Common myeloid progenitor, CD34-positive (primary cell): ENCODE measurements at regions of chr12 and their contacts with region 1.

Region 1: DNA sequence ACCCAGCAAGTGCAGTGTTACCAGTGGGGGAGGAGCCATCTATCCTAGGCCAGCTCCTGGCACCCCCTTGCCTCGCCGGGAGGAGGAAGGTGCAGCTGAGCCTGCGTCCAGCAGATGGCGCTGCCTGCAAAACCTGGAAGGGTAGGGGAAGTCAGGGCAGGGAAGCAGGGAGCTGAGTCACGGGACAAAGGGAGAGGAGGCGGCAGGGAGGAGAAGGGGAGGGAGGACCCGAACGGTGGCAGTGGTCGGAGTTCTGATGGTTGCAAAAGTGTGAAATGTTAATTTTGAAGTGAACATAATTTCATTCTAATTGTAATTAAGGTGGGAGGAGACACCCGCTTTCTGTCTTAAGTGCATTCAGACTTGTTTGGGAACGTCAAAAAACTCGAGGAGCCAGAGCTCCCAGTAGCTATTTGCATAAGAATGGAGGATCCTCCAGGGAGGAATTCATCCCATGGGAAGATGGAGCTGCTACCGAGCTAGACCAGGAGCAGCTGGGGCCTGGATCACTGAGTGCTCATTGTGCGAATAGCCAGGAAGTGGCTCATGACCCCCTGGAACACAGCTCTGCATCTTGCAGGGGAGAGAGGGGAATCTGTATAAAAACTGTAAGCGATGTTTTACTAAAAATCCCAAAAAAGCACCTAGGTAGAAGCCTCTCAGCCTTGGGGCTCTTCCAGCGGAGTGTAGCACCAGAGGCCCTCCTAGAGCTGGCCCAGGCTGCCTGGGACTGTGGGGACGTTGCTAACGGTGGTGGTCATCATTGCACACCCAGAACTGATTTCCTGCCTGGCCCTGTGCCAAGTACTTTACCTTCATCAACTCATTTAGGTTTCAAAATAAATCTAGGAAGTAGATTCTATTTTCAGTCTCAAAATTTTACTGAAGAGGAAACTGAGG is 59.5 kb downstream of the EMP1 start:
- DNase-seq: peak; percentile 92 to 94 (median 92)
- H3K4me3 ChIP-seq: peak overlapping the region in 6 of 7 experiments; percentile 25 to 67 (median 44)
- H3K27ac ChIP-seq: no peak overlapping the region
- H3K4me1 ChIP-seq: peaks cover 0 to 9% (median 6%) of the 10 kb centered on the region in 4 experiments
- H3K27me3 ChIP-seq: peaks cover 0 to 2% (median 0%) of the 10 kb centered on the region in 5 experiments

Region 2: DNA sequence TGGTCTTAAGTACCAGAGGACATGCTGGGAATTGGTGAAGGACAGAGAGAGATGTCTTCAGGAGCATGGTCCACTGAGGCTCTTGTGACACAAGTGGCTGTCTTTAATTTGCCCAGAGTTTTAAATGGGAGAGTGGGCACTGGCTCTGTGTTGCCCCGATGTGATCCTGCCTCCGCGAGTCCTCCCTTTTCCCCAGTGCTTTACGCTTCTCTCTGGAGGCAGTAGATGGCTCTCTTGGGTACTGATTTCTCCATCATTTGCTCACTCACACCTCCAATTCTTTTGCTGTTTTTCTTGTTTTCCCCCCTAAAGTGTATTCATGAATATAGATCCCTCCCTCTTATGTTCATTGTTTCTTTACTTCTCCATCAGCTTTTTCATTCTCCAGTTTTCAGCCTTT is 14.8 kb after region 1 on chr12:
- CTCF ChIA-PET with region 1: interaction called, 10 read pairs
- POLR2A ChIA-PET with region 1: no interaction called
- DNase-seq: no peak
- H3K4me3 ChIP-seq: no peak overlapping the region
- H3K27ac ChIP-seq: no peak overlapping the region
- H3K4me1 ChIP-seq: peaks cover 0 to 7% (median 2%) of the 10 kb centered on the region in 4 experiments
- H3K27me3 ChIP-seq: peaks cover 0 to 11% (median 2%) of the 10 kb centered on the region in 5 experiments

Region 3: DNA sequence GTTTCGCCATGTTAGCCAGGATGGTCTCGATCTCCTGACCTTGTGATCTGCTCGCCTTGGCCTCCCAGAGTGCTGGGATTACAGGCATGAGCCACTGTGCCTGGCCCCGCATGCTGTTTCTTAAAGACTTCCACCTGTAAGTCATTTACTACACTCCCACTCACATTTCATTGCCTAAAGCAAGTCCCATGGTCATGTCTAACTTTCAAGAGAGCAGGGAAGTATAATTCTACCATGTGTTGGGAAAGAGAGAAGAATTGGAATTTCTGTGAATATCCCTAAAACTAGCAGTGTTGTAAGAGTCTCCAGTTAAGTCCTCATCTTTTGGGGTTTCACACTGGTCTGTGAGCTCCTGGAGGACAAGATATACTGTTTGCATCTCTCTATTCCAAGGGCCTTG is 80.2 kb after region 1 on chr12:
- CTCF ChIA-PET with region 1: no interaction called
- POLR2A ChIA-PET with region 1: no interaction called
- DNase-seq: no peak
- H3K4me3 ChIP-seq: no peak overlapping the region
- H3K27ac ChIP-seq: no peak overlapping the region
- H3K4me1 ChIP-seq: no peaks in the 10 kb centered on the region
- H3K27me3 ChIP-seq: peaks cover 0 to 5% (median 4%) of the 10 kb centered on the region in 5 experiments